ENCODE measurements at regions of chr19 and their contacts with region 1.

Region 1: GRCh38 chr19:41206926-41207750 is 11.9 kb upstream of the AXL start:
- DNase-seq: peak; percentile 82 to 95 (median 85)
- ATAC-seq: peak; percentile 75 to 89 (median 82)
- H3K4me3 ChIP-seq: peak overlapping the region in 6 of 12 donors; percentile 10 to 36 (median 17)
- H3K27ac ChIP-seq: peak overlapping the region in 11 of 12 donors; percentile 32 to 74 (median 69)
- H3K4me1 ChIP-seq: peaks cover 0 to 9% (median 0%) of the 10 kb centered on the region in 12 donors
- H3K27me3 ChIP-seq: no peaks in the 10 kb centered on the region
- CTCF ChIP-seq: no peak
- POLR2A ChIP-seq: no peak

Region 2: GRCh38 chr19:41541990-41542584 is 334.9 kb after region 1 on chr19:
- intact Hi-C with region 1: no loop called
- DNase-seq: peak in 4 of 5 donors; percentile 47 to 83 (median 53)
- ATAC-seq: no peak
- H3K4me3 ChIP-seq: no peak overlapping the region
- H3K27ac ChIP-seq: no peak overlapping the region
- H3K4me1 ChIP-seq: peaks cover 0 to 30% (median 3%) of the 10 kb centered on the region in 12 donors
- H3K27me3 ChIP-seq: peaks cover 0 to 14% (median 0%) of the 10 kb centered on the region in 9 donors
- CTCF ChIP-seq: peak; percentile 44 to 78 (median 64)
- POLR2A ChIP-seq: no peak

Region 3: DNA sequence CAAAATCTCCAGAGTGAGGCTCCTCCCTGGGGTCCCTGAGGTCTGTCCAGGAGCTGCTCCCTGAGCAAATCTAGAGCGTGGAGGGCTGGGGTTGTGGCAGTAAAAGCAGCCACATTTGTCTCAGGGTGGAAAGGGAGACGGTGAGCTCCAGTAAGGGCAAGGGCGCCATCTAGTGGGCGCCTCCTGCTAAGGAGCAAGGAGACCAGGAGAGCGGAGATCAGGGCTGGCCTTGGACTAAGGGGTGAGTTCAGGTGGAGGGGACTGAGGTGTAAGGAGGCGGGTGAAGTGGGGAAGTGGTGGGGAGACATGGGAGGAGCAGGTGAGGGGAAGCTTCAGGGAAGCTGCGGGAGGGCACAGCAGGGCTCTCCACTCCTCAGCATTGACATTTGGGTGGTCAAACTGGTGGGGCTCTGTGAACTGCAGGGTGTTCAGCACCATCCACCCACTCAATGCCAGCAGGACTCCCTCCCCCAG is 363.5 kb after region 1 on chr19:
- intact Hi-C with region 1: loop called in 3 of 10 experiments (anchors 10 kb)
- DNase-seq: peak; percentile 72 to 89 (median 76)
- ATAC-seq: peak; percentile 80 to 96 (median 90)
- H3K4me3 ChIP-seq: no peak overlapping the region
- H3K27ac ChIP-seq: no peak overlapping the region
- H3K4me1 ChIP-seq: peaks cover 0 to 5% (median 0%) of the 10 kb centered on the region in 12 donors
- H3K27me3 ChIP-seq: peaks cover 2 to 53% (median 19%) of the 10 kb centered on the region in 9 donors
- CTCF ChIP-seq: peak; percentile 83 to 94 (median 88)
- POLR2A ChIP-seq: no peak